Heart right ventricle (tissue), 16 donors: ENCODE measurements at regions of chr11 and their contacts with region 1.

Region 1: DNA sequence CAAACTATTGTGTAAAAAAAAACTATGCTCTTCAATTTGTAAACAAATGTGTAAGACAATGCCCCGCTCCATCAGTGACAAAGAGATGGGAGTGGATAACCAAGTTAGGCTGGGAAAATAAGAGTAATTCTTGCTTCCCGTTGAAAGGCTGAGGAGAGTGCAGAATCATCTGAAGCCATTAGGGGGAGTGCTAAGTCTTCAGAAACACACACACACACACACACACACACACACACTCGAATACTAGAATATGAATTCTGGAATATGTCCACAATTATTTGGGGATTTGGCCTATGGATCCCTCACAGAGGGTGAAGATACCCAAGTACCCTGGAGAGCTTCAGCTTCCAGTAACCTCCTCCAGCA is 27.8 kb upstream of the ROBO3 start:
- DNase-seq: peak in 1 of 2 donors; percentile 20
- ATAC-seq: peak in 7 of 8 donors; percentile 49 to 79 (median 68)
- H3K4me3 ChIP-seq: no peak overlapping the region
- H3K27ac ChIP-seq: peak overlapping the region in 1 of 10 donors; percentile 72
- H3K4me1 ChIP-seq: peaks cover 7 to 28% (median 20%) of the 10 kb centered on the region in 9 donors
- H3K27me3 ChIP-seq: peaks cover 26 to 77% (median 56%) of the 10 kb centered on the region in 7 donors
- CTCF ChIP-seq: peak in 1 of 9 donors; percentile 39

Region 2: DNA sequence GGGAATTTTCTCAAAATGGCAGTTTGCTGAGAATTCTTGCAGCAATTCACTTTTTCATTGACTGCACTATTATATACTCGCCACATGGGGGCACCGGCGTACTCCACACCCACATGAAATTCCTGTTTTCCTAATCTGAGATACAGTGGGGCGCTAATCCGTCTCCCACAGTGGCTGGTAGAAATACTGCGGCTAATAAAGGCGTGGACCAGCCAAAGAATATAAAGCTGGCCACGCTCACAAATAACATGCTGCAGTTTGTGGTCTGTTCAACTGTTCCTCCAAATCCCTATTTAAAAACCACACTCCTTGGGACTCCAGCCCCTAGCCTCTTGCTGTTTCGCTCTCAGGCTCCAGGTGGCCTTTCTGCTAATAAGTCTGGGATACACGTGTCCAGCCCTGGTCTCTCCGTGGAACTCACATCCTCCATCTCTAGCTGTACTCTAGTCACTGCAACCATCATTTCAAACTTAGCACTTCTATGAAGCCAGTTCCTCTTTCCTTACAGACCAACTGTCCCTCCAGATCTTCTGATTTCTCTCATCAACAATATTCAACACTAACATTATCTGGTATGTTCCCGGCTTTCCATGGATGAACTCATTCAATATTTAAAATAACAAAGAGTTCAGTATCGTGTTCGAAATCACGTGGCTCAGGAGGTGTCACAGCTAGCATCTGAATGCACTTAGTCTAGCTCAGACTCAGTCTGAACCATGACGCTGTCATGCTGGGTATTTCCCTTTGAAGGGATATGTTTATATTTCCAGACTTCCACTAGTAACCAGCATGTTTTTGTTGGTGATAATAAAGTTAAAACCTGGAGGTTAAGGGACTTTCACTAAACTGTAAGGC is 192.8 kb before region 1 on chr11:
- intact Hi-C with region 1: loop called in 6 of 10 experiments (anchors 1 to 10 kb)
- DNase-seq: peak; percentile 17 to 35
- ATAC-seq: peak; percentile 57 to 88 (median 80)
- H3K4me3 ChIP-seq: peak overlapping the region in 4 of 10 donors; percentile 1 to 26 (median 12)
- H3K27ac ChIP-seq: no peak overlapping the region
- H3K4me1 ChIP-seq: peaks cover 0 to 12% (median 6%) of the 10 kb centered on the region in 9 donors
- H3K27me3 ChIP-seq: no peaks in the 10 kb centered on the region
- CTCF ChIP-seq: peak; percentile 72 to 87 (median 81)

Region 3: DNA sequence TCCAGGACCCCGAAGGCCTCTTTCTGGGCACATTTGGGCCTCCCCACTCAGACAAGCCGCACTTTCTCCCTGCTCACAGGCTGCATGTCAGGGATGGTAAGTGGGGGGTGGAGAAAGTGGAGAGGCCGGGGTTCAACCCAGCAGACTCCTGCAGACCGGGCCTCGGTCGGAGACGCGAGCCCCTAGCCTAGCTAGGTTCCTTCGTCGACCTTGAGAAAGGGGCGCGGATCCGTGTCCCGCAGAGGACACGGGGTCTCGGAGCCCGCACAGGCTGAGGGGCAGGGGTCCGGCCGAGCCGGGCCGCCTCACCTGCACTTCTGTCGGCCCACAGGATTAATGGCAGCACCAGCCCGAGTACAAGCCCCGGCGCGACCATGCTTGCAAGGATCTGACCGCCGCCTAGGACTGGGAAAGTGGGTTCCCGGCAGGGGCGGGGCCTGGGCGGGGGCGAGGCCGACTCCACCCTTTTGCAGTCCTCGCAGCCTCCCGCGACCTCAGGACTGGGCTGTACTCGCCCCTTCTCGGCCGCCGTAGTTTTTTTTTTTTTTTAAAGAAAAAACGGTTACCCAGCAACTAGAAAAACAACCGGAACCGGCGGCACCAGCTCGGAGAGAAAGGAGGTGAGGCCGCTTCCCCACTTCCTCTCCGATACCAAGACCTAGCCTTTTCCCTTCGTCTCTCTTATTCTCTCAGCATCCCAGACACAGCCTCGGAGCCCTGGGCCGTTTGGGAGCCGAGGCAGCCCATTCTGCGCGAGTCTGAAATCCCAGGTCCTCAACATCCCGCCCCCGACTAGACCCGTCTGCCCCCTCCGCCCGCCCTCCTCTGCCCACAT is 163.9 kb before region 1 on chr11 and contains the starts of genes SIAE and SPA17:
- intact Hi-C with region 1: loop called in 9 of 10 experiments (anchors 1 to 5 kb)
- DNase-seq: peak; percentile 96
- ATAC-seq: peak; percentile 98 to 100 (median 99)
- H3K4me3 ChIP-seq: peak within 1 kb of the TSS; percentile 65 to 86 (median 70)
- H3K27ac ChIP-seq: peak within 1 kb of the TSS; percentile 61 to 97 (median 89)
- H3K4me1 ChIP-seq: peaks cover 3 to 44% (median 27%) of the 10 kb centered on the region in 9 donors
- H3K27me3 ChIP-seq: no peaks in the 10 kb centered on the region
- CTCF ChIP-seq: no peak
- total RNA-seq, gene SIAE: 67.0 to 92.9 (median 74.3) TPM
- total RNA-seq, gene SPA17: 0.62 to 4.9 (median 2.0) TPM

Region 4: GRCh38 chr11:124758317-124759203 is 78.9 kb before region 1 on chr11:
- intact Hi-C with region 1: loop called in 4 of 10 experiments (anchors 5 to 10 kb)
- DNase-seq: peak; percentile 70 to 78
- ATAC-seq: peak; percentile 28 to 58 (median 50)
- H3K4me3 ChIP-seq: peak overlapping the region; percentile 31 to 94 (median 78)
- H3K27ac ChIP-seq: peak overlapping the region; percentile 76 to 99 (median 95)
- H3K4me1 ChIP-seq: peaks cover 14 to 87% (median 72%) of the 10 kb centered on the region in 9 donors
- H3K27me3 ChIP-seq: peaks cover 0 to 76% (median 57%) of the 10 kb centered on the region in 7 donors
- CTCF ChIP-seq: peak; percentile 61 to 81 (median 73)

Region 5: GRCh38 chr11:124778281-124778680 is 59.2 kb before region 1 on chr11:
- intact Hi-C with region 1: loop called in 1 of 10 experiments (anchors 10 kb)
- DNase-seq: no peak
- ATAC-seq: no peak
- H3K4me3 ChIP-seq: no peak overlapping the region
- H3K27ac ChIP-seq: no peak overlapping the region
- H3K4me1 ChIP-seq: peaks cover 0 to 3% (median 0%) of the 10 kb centered on the region in 9 donors
- H3K27me3 ChIP-seq: no peaks in the 10 kb centered on the region
- CTCF ChIP-seq: peak in 3 of 9 donors; percentile 15 to 24 (median 18)

Region 6: DNA sequence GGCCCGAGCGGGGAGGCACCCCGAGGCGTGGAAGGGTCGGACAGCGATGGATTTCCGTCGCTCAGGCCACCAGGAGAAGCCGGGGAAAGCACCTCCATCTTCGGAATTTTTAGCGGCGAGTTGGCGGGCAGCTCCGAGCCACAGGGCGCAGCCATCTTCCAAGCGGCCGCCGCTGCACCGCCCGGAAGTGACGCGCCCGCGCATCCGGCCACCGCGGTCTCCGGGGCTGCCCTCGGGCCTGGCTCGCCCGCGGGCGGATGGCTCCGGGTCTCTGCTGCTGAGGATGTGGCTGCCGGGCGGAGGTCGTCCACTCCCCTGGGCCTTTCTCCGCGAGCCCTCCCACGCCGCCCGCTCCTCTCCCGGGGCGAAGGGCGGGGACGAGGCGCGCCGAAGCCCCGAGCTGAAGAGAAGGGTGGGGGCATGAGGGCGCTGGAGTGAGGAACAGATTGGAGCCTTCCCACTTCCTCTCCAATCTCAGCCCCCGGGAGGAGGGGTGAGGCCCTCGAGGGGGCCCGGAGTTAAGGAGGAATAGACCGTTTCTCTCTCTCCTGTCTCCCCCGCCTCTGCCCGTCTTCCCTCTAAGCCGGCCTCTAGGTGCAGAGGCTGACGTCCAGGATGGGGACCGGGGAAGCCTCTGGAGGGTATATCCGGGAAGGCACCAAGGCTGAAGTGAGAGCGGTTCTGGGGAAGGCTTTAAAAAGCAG is 37.1 kb before region 1 on chr11 and contains the start of gene MSANTD2:
- intact Hi-C with region 1: loop called in 4 of 10 experiments (anchors 2 to 5 kb)
- DNase-seq: peak; percentile 83 to 86
- ATAC-seq: peak; percentile 96 to 99 (median 98)
- H3K4me3 ChIP-seq: peak within 1 kb of the TSS; percentile 65 to 93 (median 84)
- H3K27ac ChIP-seq: peak within 1 kb of the TSS; percentile 94 to 100 (median 98)
- H3K4me1 ChIP-seq: peaks cover 5 to 37% (median 33%) of the 10 kb centered on the region in 9 donors
- H3K27me3 ChIP-seq: peaks cover 0 to 4% (median 0%) of the 10 kb centered on the region in 7 donors
- CTCF ChIP-seq: no peak
- total RNA-seq, gene MSANTD2: 2.4 to 4.6 (median 3.1) TPM

Region 7: DNA sequence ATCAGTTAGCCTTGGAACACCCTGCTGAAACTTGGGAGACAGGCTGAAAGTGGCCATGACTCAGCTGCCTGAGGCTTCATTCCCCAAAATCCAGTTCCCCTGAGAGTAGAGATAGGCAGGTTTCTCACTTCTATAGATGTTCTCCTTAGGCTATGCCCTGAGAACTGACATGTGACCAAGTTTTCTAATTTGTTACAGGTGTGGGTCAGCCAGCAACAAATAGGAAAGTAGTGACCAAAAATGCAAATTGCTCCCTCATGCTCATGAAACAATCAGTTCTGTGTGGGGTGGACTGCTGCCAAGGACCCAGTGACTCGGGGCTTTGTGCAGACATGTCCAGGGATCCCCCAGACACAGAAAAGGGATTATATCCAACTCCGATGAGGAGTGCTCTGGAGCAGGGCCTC is 109.3 kb after region 1 on chr11:
- intact Hi-C with region 1: no loop called
- DNase-seq: no peak
- ATAC-seq: no peak
- H3K4me3 ChIP-seq: no peak overlapping the region
- H3K27ac ChIP-seq: no peak overlapping the region
- H3K4me1 ChIP-seq: no peaks in the 10 kb centered on the region
- H3K27me3 ChIP-seq: no peaks in the 10 kb centered on the region
- CTCF ChIP-seq: no peak